ENCODE measurements at regions of chr6 and their contacts with region 1.

Region 1: DNA sequence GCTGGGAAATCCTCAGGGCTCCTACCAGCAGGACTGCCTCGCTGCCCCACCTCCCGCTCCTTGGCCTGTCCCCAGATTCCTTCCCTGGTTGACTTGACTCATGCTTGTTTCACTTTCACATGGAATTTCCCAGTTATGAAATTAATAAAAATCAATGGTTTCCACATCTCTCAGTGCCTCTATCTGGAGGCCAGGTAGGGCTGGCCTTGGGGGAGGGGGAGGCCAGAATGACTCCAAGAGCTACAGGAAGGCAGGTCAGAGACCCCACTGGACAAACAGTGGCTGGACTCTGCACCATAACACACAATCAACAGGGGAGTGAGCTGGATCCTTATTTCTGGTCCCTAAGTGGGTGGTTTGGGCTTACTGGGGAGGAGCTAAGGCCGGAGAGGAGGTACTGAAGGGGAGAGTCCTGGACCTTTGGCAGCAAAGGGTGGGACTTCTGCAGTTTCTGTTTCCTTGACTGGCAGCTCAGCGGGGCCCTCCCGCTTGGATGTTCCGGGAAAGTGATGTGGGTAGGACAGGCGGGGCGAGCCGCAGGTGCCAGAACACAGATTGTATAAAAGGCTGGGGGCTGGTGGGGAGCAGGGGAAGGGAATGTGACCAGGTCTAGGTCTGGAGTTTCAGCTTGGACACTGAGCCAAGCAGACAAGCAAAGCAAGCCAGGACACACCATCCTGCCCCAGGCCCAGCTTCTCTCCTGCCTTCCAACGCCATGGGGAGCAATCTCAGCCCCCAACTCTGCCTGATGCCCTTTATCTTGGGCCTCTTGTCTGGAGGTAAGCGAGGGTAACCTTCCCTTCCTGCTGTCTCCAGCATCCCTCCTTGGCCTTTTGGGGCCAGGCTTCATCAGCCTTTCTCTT is at the start of gene CFB:
- DNase-seq: peak in 1 of 2 donors; percentile 96
- H3K4me3 ChIP-seq: peak within 1 kb of the TSS; percentile 17 to 20
- H3K27ac ChIP-seq: peak within 1 kb of the TSS; percentile 82
- H3K4me1 ChIP-seq: peaks cover 19% of the 10 kb centered on the region
- H3K27me3 ChIP-seq: no peaks in the 10 kb centered on the region
- CTCF ChIP-seq: no peak
- POLR2A ChIP-seq: no peak
- total RNA-seq, gene CFB: 9.6 TPM

Region 2: GRCh38 chr6:31901953-31902643 is 43.6 kb before region 1 on chr6 and contains the start of gene ZBTB12:
- intact Hi-C with region 1: loop called (anchors 5 kb)
- DNase-seq: peak in 1 of 2 donors; percentile 95
- H3K4me3 ChIP-seq: peak within 1 kb of the TSS; percentile 54 to 76
- H3K27ac ChIP-seq: peak within 1 kb of the TSS; percentile 84
- H3K4me1 ChIP-seq: peaks cover 39% of the 10 kb centered on the region
- H3K27me3 ChIP-seq: no peaks in the 10 kb centered on the region
- CTCF ChIP-seq: no peak
- POLR2A ChIP-seq: no peak
- total RNA-seq, gene ZBTB12: 1.7 TPM